WTC11 (cell line): ENCODE measurements at regions of chr19 and their contacts with region 1.

Region 1: DNA sequence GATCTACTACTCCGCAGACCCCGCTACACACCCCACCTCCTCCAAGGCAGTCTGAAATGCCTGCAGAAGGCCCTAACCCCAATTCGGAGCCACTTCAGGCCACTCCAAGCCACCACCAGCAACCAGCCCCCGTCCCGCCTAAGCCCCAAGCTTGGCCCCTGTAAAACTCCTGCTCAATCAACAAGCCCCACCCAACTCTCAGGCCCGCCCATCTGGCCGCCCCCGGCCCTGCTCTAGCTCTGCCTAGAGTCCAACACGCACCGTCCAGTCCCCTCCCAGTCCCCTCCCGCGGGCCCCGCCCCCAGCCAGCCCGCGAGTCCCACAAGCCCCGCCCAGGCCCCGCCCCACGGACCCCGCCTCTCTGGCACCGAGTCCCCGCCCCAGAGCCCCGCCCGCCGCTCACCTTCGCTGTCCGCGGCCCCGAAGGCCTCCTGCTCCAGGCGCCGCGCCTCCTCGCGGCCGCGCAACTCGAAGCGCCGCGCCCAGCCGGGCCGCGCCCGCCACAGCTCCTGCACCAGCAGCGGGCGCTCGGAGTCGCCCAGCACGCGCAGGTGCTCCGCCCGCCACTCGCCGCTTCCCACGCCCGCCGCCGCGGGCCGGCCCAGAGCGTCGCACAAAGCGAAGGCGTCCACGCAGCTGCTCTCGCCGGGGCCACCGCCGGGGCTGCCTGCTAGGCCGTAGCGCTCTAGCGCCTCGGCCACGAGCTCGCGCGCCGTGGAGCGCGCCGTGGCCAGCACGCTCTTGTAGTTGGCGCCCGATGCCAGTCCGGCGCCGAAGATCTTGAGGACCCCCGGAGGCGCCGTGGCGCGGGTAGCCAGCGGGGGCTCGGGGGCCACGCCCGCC is 1.6 kb downstream of the RASIP1 start:
- DNase-seq: peak; percentile 99
- ATAC-seq: peak; percentile 81
- H3K4me3 Mint-ChIP-seq: peak overlapping the region; percentile 63
- H3K27ac Mint-ChIP-seq: peak overlapping the region; percentile 94
- H3K4me1 Mint-ChIP-seq: peaks cover 42% of the 10 kb centered on the region
- H3K27me3 Mint-ChIP-seq: peaks cover 49% of the 10 kb centered on the region
- CTCF ChIP-seq: no peak

Region 2: GRCh38 chr19:48661746-48662145 is 77.0 kb before region 1 on chr19:
- CTCF ChIA-PET with region 1: no interaction called
- POLR2A ChIA-PET with region 1: no interaction called
- DNase-seq: no peak
- ATAC-seq: no peak
- H3K4me3 Mint-ChIP-seq: no peak overlapping the region
- H3K27ac Mint-ChIP-seq: no peak overlapping the region
- H3K4me1 Mint-ChIP-seq: peaks cover 6% of the 10 kb centered on the region
- H3K27me3 Mint-ChIP-seq: peaks cover 23% of the 10 kb centered on the region
- CTCF ChIP-seq: no peak

Region 3: GRCh38 chr19:48674921-48675824 is 63.6 kb before region 1 on chr19:
- CTCF ChIA-PET with region 1: interaction called, 56 read pairs
- POLR2A ChIA-PET with region 1: no interaction called
- DNase-seq: peak; percentile 91
- ATAC-seq: peak; percentile 85
- H3K4me3 Mint-ChIP-seq: no peak overlapping the region; the same call in 1 of the 2 replicates
- H3K27ac Mint-ChIP-seq: no peak overlapping the region
- H3K4me1 Mint-ChIP-seq: peaks cover 26% of the 10 kb centered on the region
- H3K27me3 Mint-ChIP-seq: peaks cover 17% of the 10 kb centered on the region
- CTCF ChIP-seq: peak; percentile 81

Region 4: DNA sequence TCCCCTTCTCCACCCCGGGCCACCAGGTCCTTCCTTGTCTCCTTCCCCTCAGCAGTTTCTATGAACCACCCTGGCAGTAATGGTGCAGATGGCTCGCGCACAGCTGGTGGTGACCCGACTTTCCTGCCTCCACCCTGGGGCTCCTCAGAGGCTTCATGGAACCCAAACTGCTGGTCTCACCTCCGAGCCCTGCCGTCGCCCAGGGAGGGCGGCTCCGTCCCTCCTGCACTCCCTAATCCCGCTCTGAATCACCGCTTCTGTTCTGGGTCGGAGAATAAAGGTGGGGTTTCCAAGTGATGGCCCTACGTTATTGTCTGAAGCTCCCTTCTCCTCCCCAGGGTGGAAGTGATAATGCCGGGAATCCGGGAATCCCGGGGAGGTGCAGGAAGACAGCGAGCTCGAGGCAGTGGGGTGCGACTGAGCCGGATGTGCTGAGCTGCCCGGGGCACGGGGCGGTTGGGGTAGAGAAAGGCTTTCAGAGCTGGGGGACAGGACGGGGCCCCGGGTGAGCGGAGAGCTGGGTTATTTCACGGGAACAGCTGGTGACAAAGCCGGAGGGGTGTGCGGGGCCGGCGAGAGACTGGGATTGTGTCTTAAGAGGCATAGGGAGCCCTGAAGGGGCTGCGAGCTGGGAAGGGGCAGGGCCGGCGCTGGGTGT is 42.3 kb before region 1 on chr19:
- CTCF ChIA-PET with region 1: interaction called, 22 read pairs
- POLR2A ChIA-PET with region 1: interaction called, 10 read pairs
- DNase-seq: peak; percentile 46
- ATAC-seq: peak; percentile 53
- H3K4me3 Mint-ChIP-seq: peak overlapping the region; percentile 97
- H3K27ac Mint-ChIP-seq: peak overlapping the region; percentile 79
- H3K4me1 Mint-ChIP-seq: peaks cover 4% of the 10 kb centered on the region
- H3K27me3 Mint-ChIP-seq: no peaks in the 10 kb centered on the region
- CTCF ChIP-seq: no peak

Region 5: GRCh38 chr19:48720613-48721296 is 18.0 kb before region 1 on chr19:
- CTCF ChIA-PET with region 1: interaction called, 22 read pairs
- POLR2A ChIA-PET with region 1: interaction called, 4 read pairs
- DNase-seq: peak; percentile 98
- ATAC-seq: peak; percentile 88
- H3K4me3 Mint-ChIP-seq: peak overlapping the region; percentile 97
- H3K27ac Mint-ChIP-seq: peak overlapping the region; percentile 96
- H3K4me1 Mint-ChIP-seq: peaks cover 30% of the 10 kb centered on the region
- H3K27me3 Mint-ChIP-seq: no peaks in the 10 kb centered on the region
- CTCF ChIP-seq: no peak

Region 6: DNA sequence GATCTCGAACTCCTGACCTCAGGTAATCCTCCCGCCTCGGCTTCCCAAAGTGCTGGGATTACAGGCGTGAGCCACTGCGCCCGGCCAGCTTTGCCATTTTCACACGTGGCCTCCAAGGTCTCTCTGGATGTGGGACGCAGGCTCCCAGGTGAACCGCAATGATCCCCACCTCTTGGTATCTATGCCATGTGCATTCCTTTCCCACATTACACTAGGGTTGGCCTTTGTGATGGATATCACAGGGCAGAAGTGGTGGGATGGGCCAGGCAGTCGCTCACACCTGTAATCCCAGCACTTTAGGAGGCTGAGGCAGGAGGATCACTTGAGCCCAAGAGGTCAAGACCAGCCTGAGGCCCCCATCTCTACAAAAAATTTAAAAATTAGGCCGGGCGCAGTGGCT is 38.9 kb after region 1 on chr19:
- CTCF ChIA-PET with region 1: no interaction called
- POLR2A ChIA-PET with region 1: no interaction called
- DNase-seq: no peak
- ATAC-seq: peak; percentile 48; the same call in 1 of the 2 replicates
- H3K4me3 Mint-ChIP-seq: no peak overlapping the region
- H3K27ac Mint-ChIP-seq: no peak overlapping the region
- H3K4me1 Mint-ChIP-seq: peaks cover 2% of the 10 kb centered on the region; the same call in 1 of the 2 replicates
- H3K27me3 Mint-ChIP-seq: peaks cover 4% of the 10 kb centered on the region
- CTCF ChIP-seq: no peak